Gastrocnemius medialis (tissue), 4 donors: ENCODE measurements at regions of chr17 and their contacts with region 1.

Region 1: GRCh38 chr17:79991140-79991923 is 44.3 kb downstream of the TBC1D16 start:
- DNase-seq: peak; percentile 22 to 56
- ATAC-seq: peak; percentile 29 to 62
- H3K4me3 ChIP-seq: peak overlapping the region in 1 of 4 donors; percentile 3
- H3K27ac ChIP-seq: no peak overlapping the region
- H3K4me1 ChIP-seq: peaks cover 5 to 7% of the 10 kb centered on the region in 2 donors
- H3K27me3 ChIP-seq: peaks cover 3 to 12% (median 12%) of the 10 kb centered on the region in 3 donors
- CTCF ChIP-seq: peak in 2 of 5 experiments; percentile 60 to 67
- POLR2A ChIP-seq: no peak

Region 2: GRCh38 chr17:79741751-79742588 is 249.4 kb before region 1 on chr17:
- in situ Hi-C with region 1: no loop called
- intact Hi-C with region 1: loop called (anchors 1 kb)
- DNase-seq: peak; percentile 16 to 23
- ATAC-seq: peak; percentile 58 to 65
- H3K4me3 ChIP-seq: peak overlapping the region in 1 of 4 donors; percentile 42
- H3K27ac ChIP-seq: no peak overlapping the region
- H3K4me1 ChIP-seq: peaks cover 0 to 5% of the 10 kb centered on the region in 2 donors
- H3K27me3 ChIP-seq: peaks cover 43 to 60% (median 47%) of the 10 kb centered on the region in 3 donors
- CTCF ChIP-seq: peak; percentile 78 to 98 (median 82)
- POLR2A ChIP-seq: no peak

Region 3: DNA sequence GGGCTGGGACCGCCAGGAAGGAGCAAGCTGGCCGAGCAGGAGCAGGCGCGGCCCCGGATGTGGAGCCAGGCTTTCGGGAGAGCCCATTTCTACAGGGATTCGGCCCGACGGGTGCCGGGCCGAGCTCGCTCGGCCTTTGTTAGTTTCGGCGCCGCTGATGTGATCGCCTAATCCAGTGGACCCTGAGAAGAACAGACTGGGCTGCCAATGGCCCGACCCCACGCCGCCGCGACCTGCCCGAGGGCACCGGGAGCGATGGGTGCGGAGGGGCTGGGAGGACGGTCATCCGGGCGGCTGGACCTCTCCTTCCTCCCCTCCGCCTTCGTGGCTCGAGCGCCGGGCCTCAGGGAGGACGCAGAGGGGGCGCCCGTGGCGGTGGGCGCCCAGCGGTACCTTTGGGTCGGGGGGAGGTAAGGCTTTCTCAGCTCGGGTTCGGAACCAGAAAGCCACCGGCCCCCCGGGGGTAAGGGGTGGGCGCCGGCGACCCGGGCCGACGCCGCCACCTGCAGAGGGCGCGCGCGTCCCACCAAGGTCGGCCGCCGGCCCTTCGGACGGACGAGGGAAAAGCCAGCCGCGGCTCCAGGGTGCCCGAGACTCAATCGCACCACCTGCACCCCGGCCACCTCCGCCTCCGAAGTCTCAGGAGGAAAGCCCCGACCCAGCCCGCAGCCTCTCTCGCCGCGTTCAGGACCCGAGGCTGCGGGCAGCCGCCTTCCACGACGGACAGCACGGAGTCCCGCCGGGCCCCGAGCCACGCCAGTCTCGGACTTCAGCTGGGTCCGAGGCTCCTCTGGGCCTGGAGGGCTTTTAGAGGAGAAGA is 201.6 kb before region 1 on chr17:
- in situ Hi-C with region 1: no loop called
- intact Hi-C with region 1: loop called (anchors 1 kb)
- DNase-seq: no peak
- ATAC-seq: peak; percentile 39 to 58
- H3K4me3 ChIP-seq: peak overlapping the region in 2 of 4 donors; percentile 0 to 8
- H3K27ac ChIP-seq: no peak overlapping the region
- H3K4me1 ChIP-seq: peaks cover 7 to 21% of the 10 kb centered on the region in 2 donors
- H3K27me3 ChIP-seq: peaks cover 71 to 84% (median 80%) of the 10 kb centered on the region in 3 donors
- CTCF ChIP-seq: peak; percentile 68 to 82 (median 79)
- POLR2A ChIP-seq: no peak

Region 4: GRCh38 chr17:79839363-79840268 is 151.7 kb before region 1 on chr17 and contains the start of gene CBX4:
- in situ Hi-C with region 1: no loop called
- intact Hi-C with region 1: loop called (anchors 5 kb)
- DNase-seq: peak; percentile 83 to 90
- ATAC-seq: peak; percentile 83
- H3K4me3 ChIP-seq: peak within 1 kb of the TSS; percentile 72 to 91 (median 75)
- H3K27ac ChIP-seq: peak within 1 kb of the TSS; percentile 73 to 85 (median 82)
- H3K4me1 ChIP-seq: peaks cover 43 to 58% of the 10 kb centered on the region in 2 donors
- H3K27me3 ChIP-seq: peaks cover 46 to 50% (median 48%) of the 10 kb centered on the region in 3 donors
- CTCF ChIP-seq: peak; percentile 58 to 91 (median 82)
- POLR2A ChIP-seq: peak; percentile 76 to 88
- total RNA-seq, gene CBX4: 3.0 to 9.0 (median 5.3) TPM